CD4-positive, alpha-beta memory T cell (primary cell): ENCODE measurements at regions of chr12 and their contacts with region 1.

Region 1: DNA sequence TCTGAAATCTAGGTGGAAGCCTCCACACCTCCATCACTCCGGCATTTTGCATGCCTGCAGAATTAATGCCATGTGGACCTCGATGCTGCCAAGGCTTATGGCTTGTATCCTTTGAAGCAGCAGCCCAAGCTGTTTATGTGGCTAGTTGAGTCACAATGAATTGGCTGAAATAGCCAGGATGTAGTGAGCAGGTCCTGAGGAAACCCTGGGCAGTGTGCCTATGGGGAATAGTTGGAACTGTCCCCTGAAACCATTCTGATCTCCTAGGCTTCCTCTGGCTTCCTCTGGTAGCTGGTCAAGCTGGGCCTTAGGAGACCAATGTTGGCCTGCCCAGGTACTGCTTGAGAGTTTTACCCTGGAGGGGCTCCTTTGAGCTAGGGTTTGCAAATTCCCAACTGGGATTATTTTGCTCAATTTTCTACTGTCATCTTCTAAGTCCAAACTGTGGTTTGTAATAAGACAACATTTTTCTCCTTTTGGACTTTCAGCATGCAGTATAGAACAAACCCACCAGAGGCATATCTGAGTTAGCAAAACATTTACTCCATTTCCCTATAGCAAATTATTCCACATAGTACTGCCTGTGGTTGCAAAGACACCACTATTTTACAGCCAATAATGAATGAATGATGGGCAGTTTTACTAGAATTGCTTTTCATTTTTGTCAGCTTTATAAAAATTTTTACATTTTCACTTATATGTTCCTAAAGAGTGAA is 85.1 kb upstream of the AMIGO2 start:
- DNase-seq: no peak
- H3K4me3 ChIP-seq: no peak overlapping the region
- H3K4me3 Mint-ChIP-seq: no peak overlapping the region
- H3K27ac ChIP-seq: no peak overlapping the region
- H3K27ac Mint-ChIP-seq: no peak overlapping the region
- H3K4me1 ChIP-seq: peaks cover 3% of the 10 kb centered on the region
- H3K4me1 Mint-ChIP-seq: peaks cover 7 to 23% (median 13%) of the 10 kb centered on the region in 4 donors
- H3K27me3 ChIP-seq: no peaks in the 10 kb centered on the region
- H3K27me3 Mint-ChIP-seq: no peaks in the 10 kb centered on the region

Region 2: GRCh38 chr12:47147739-47148138 is 17.1 kb before region 1 on chr12:
- CTCF ChIA-PET with region 1: interaction called, 3 read pairs
- POLR2A ChIA-PET with region 1: interaction called, 3 read pairs
- intact Hi-C with region 1: loop called (anchors 2 kb)
- DNase-seq: no peak
- H3K4me3 ChIP-seq: no peak overlapping the region
- H3K4me3 Mint-ChIP-seq: no peak overlapping the region
- H3K27ac ChIP-seq: no peak overlapping the region
- H3K27ac Mint-ChIP-seq: peak overlapping the region in 1 of 7 donors; percentile 48
- H3K4me1 ChIP-seq: peaks cover 17% of the 10 kb centered on the region
- H3K4me1 Mint-ChIP-seq: peaks cover 18 to 32% (median 21%) of the 10 kb centered on the region in 4 donors
- H3K27me3 ChIP-seq: no peaks in the 10 kb centered on the region
- H3K27me3 Mint-ChIP-seq: no peaks in the 10 kb centered on the region

Region 3: DNA sequence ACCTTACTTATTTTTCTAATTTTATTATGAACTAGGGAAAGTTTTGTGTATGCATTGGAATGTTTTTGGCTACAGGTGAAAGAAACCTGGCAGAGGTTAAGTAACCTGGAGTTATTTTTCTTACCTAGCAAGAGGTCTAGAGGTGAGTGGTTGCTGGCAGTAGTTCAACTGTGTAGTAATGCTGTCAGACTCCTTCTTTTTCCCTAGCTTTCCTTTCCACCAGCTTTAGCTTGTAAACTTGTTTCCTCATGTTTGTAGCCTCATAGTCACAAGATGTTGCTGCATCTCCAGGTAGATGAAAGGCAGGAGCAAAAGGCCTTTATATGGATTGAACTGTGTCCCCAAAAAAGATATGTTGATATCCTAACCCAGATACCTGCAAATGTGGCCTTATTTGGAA is 19.9 kb after region 1 on chr12:
- CTCF ChIA-PET with region 1: interaction called, 4 read pairs
- POLR2A ChIA-PET with region 1: interaction called, 3 read pairs
- intact Hi-C with region 1: loop called (anchors 2 kb)
- DNase-seq: no peak
- H3K4me3 ChIP-seq: no peak overlapping the region
- H3K4me3 Mint-ChIP-seq: no peak overlapping the region
- H3K27ac ChIP-seq: no peak overlapping the region
- H3K27ac Mint-ChIP-seq: peak overlapping the region in 1 of 7 donors; percentile 73
- H3K4me1 ChIP-seq: peaks cover 31% of the 10 kb centered on the region
- H3K4me1 Mint-ChIP-seq: peaks cover 34 to 48% (median 43%) of the 10 kb centered on the region in 4 donors
- H3K27me3 ChIP-seq: no peaks in the 10 kb centered on the region
- H3K27me3 Mint-ChIP-seq: no peaks in the 10 kb centered on the region